ENCODE measurements at regions of chr22 and their contacts with region 1.

Region 1: GRCh38 chr22:39946503-39947219 is 13.5 kb upstream of the TMA7B start:
- DNase-seq: no peak
- ATAC-seq: peak; percentile 49
- H3K4me3 ChIP-seq: peak overlapping the region; percentile 26
- H3K4me3 Mint-ChIP-seq: peak overlapping the region in 9 of 10 donors; percentile 65 to 82 (median 78)
- H3K27ac ChIP-seq: peak overlapping the region; percentile 79
- H3K27ac Mint-ChIP-seq: peak overlapping the region in 5 of 9 donors; percentile 77 to 98 (median 98)
- H3K4me1 ChIP-seq: peaks cover 81 to 99% of the 10 kb centered on the region in 2 donors
- H3K4me1 Mint-ChIP-seq: peaks cover 78 to 100% (median 96%) of the 10 kb centered on the region in 7 donors
- H3K27me3 ChIP-seq: no peaks in the 10 kb centered on the region
- H3K27me3 Mint-ChIP-seq: no peaks in the 10 kb centered on the region

Region 2: GRCh38 chr22:39545386-39546365 is 401.0 kb before region 1 on chr22:
- CTCF ChIA-PET with region 1: no interaction called
- POLR2A ChIA-PET with region 1: no interaction called
- intact Hi-C with region 1: loop called in 1 of 2 experiments (anchors 5 kb)
- DNase-seq: peak; percentile 38 to 77 (median 68)
- ATAC-seq: peak; percentile 66
- H3K4me3 ChIP-seq: no peak overlapping the region
- H3K4me3 Mint-ChIP-seq: peak overlapping the region in 4 of 10 donors; percentile 27 to 51 (median 44)
- H3K27ac ChIP-seq: no peak overlapping the region
- H3K27ac Mint-ChIP-seq: peak overlapping the region in 4 of 9 donors; percentile 4 to 87 (median 70)
- H3K4me1 ChIP-seq: peaks cover 0 to 13% of the 10 kb centered on the region in 2 donors
- H3K4me1 Mint-ChIP-seq: peaks cover 11 to 25% (median 15%) of the 10 kb centered on the region in 7 donors
- H3K27me3 ChIP-seq: no peaks in the 10 kb centered on the region
- H3K27me3 Mint-ChIP-seq: peaks cover 25 to 43% (median 31%) of the 10 kb centered on the region in 5 donors

Region 3: GRCh38 chr22:39750759-39751158 is 195.9 kb before region 1 on chr22:
- CTCF ChIA-PET with region 1: no interaction called
- POLR2A ChIA-PET with region 1: no interaction called
- intact Hi-C with region 1: loop called in 1 of 2 experiments (anchors 5 kb)
- DNase-seq: no peak
- ATAC-seq: no peak
- H3K4me3 ChIP-seq: no peak overlapping the region
- H3K4me3 Mint-ChIP-seq: peak overlapping the region in 1 of 10 donors; percentile 17
- H3K27ac ChIP-seq: no peak overlapping the region
- H3K27ac Mint-ChIP-seq: peak overlapping the region in 1 of 9 donors; percentile 21
- H3K4me1 ChIP-seq: peaks cover 9 to 17% of the 10 kb centered on the region in 2 donors
- H3K4me1 Mint-ChIP-seq: peaks cover 6 to 51% (median 40%) of the 10 kb centered on the region in 7 donors
- H3K27me3 ChIP-seq: no peaks in the 10 kb centered on the region
- H3K27me3 Mint-ChIP-seq: peaks cover 0 to 9% (median 0%) of the 10 kb centered on the region in 5 donors

Region 4: GRCh38 chr22:39927544-39927943 is 19.1 kb before region 1 on chr22:
- CTCF ChIA-PET with region 1: interaction called, 7 read pairs
- POLR2A ChIA-PET with region 1: interaction called, 13 read pairs
- intact Hi-C with region 1: loop called in 1 of 2 experiments (anchors 2 kb)
- DNase-seq: no peak
- ATAC-seq: no peak
- H3K4me3 ChIP-seq: peak overlapping the region; percentile 68
- H3K4me3 Mint-ChIP-seq: no peak overlapping the region
- H3K27ac ChIP-seq: peak overlapping the region; percentile 78
- H3K27ac Mint-ChIP-seq: no peak overlapping the region
- H3K4me1 ChIP-seq: peaks cover 90 to 94% of the 10 kb centered on the region in 2 donors
- H3K4me1 Mint-ChIP-seq: peaks cover 34 to 48% (median 41%) of the 10 kb centered on the region in 7 donors
- H3K27me3 ChIP-seq: no peaks in the 10 kb centered on the region
- H3K27me3 Mint-ChIP-seq: no peaks in the 10 kb centered on the region

Region 5: DNA sequence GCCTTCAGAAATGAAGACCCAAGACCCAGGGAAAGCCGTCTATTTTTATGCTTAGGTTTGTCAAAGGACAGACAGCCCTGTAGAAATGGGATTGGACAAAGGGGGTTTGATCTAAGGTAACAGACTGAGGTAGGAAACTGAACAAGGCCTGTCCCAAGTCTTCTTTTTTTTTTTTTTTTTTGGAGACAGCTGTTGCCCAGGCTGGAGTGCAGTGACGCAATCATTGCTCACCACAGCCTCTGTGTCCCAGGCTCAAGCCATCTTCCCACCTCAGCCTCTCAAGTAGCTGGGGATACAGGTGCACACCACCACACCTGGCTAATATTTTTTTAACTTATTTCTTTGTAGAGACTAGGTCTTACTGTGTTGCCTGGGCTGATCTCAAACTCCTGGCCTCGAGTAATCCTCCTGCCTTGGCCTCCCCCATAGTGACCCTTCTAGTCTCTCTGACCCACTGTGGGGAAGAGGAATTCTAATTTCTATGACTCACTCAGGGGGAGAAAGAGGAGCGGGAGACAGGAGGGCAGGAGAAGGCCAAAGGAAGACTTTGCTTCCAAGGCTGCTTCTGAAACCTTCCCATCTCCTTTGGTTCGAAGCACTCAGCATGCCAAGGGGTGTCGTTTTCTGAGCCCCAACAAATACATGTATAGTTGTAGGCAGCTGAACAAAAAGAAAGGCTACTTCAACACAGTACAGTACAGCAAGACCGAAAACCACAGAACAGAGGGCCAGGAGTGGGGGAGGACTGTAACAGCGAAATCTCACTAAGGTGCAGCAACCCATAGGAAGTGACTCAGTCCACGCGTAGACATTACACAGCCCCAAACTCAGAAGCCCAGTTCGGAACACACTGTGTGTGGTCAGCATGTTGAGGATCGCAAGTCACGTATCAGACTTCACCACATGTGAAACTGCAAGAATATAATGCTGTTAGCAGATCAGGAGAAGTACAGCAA is 14.4 kb after region 1 on chr22:
- CTCF ChIA-PET with region 1: interaction called, 6 read pairs
- POLR2A ChIA-PET with region 1: interaction called, 7 read pairs
- intact Hi-C with region 1: loop called (anchors 1 kb)
- DNase-seq: peak in 3 of 9 donors; percentile 18 to 63 (median 41)
- ATAC-seq: peak; percentile 95
- H3K4me3 ChIP-seq: no peak overlapping the region
- H3K4me3 Mint-ChIP-seq: peak overlapping the region; percentile 21 to 78 (median 52)
- H3K27ac ChIP-seq: peak overlapping the region; percentile 44
- H3K27ac Mint-ChIP-seq: peak overlapping the region in 7 of 9 donors; percentile 81 to 93 (median 85)
- H3K4me1 ChIP-seq: peaks cover 42 to 48% of the 10 kb centered on the region in 2 donors
- H3K4me1 Mint-ChIP-seq: peaks cover 43 to 68% (median 61%) of the 10 kb centered on the region in 7 donors
- H3K27me3 ChIP-seq: no peaks in the 10 kb centered on the region
- H3K27me3 Mint-ChIP-seq: no peaks in the 10 kb centered on the region

Measured in naive thymus-derived CD4-positive, alpha-beta T cell (primary cell).